HEK293 (cell line): ENCODE measurements at regions of chr10 and their contacts with region 1.

Region 1: GRCh38 chr10:91006001-91006751 is 85.3 kb upstream of the ANKRD1 start:
- H3K4me3 ChIP-seq: no peak overlapping the region
- H3K27ac ChIP-seq: no peak overlapping the region
- H3K4me1 ChIP-seq: no peaks in the 10 kb centered on the region
- CTCF ChIP-seq: peak; percentile 82

Region 2: GRCh38 chr10:90912174-90912573 is 94.0 kb before region 1 on chr10:
- CTCF ChIA-PET with region 1: interaction called, 23 read pairs
- POLR2A ChIA-PET with region 1: no interaction called
- H3K4me3 ChIP-seq: no peak overlapping the region
- H3K27ac ChIP-seq: no peak overlapping the region
- H3K4me1 ChIP-seq: no peaks in the 10 kb centered on the region
- CTCF ChIP-seq: no peak

Region 3: GRCh38 chr10:90947030-90947940 is 58.9 kb before region 1 on chr10:
- CTCF ChIA-PET with region 1: no interaction called
- POLR2A ChIA-PET with region 1: no interaction called
- H3K4me3 ChIP-seq: no peak overlapping the region
- H3K27ac ChIP-seq: no peak overlapping the region
- H3K4me1 ChIP-seq: no peaks in the 10 kb centered on the region
- CTCF ChIP-seq: no peak

Region 4: DNA sequence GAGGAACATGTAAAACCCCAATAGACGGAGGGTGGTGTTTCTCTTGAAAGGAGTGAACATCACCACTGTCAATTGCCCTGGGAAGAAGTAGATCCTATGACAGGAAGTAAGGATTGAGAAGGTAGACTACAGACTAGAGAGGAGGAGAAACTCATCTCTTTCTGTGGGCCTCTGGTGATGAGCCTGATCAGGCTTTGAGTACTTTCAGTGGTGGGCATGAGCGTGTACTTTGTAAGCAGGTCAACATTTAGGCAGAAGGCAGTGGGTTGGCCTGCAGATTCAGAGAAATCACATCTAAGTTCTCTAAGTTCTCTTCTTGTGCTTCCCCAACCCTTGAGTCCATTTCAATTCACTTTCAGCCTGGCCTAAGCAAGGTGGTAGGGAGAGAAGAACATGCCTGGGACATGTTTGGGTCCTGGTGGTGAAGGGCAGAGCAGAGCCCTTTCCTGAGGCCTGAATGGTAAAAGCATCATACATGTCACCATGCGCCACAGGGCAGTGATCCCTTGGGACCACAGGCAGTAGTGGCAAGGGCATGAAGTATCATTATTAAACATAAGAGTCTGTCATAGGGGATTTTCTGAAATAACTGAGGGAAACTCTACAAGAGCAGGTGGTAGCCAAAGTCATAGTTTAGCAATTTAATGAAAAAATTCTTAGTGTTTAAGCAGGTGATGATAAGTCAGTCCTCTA is 28.9 kb before region 1 on chr10:
- CTCF ChIA-PET with region 1: interaction called, 18 read pairs
- POLR2A ChIA-PET with region 1: no interaction called
- H3K4me3 ChIP-seq: no peak overlapping the region
- H3K27ac ChIP-seq: no peak overlapping the region
- H3K4me1 ChIP-seq: no peaks in the 10 kb centered on the region
- CTCF ChIP-seq: no peak

Region 5: DNA sequence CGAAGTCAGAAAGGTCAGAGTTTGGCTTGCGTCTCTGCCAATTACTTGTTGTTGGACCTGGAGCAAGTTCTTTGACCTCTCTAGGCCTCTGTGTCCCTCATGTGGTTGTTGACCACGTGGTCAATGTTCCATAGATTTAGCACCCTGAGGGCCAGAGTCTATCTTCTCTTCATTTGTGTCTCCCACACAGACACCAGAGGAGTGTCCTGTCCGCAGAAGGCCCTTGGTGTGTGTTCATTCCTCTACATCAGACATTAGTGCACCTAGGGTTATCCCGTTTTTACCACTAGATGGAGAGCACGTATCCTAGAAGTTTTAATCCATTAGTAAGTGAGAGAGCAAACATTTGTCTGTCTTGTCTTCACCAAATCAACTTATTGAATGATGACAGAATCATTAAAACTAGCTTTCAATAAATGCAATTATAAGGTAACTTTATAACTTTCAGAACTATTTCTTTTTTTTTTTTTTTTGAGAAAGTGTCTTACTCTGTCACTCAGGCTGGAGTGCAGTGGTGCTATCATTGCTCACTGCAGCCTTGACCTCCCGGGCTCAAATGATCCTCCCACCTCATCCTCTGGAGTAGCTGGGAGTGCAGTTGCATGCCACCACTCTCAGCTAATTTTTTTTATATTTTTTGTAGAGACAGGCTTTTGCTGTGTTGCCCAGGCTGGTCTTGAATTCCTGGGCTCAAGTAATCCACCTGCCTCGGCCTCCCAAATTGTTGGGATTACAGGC is 37.2 kb after region 1 on chr10:
- CTCF ChIA-PET with region 1: interaction called, 11 read pairs
- POLR2A ChIA-PET with region 1: no interaction called
- H3K4me3 ChIP-seq: no peak overlapping the region
- H3K27ac ChIP-seq: no peak overlapping the region
- H3K4me1 ChIP-seq: no peaks in the 10 kb centered on the region
- CTCF ChIP-seq: peak; percentile 60; the same call in 1 of the 2 replicates

Region 6: DNA sequence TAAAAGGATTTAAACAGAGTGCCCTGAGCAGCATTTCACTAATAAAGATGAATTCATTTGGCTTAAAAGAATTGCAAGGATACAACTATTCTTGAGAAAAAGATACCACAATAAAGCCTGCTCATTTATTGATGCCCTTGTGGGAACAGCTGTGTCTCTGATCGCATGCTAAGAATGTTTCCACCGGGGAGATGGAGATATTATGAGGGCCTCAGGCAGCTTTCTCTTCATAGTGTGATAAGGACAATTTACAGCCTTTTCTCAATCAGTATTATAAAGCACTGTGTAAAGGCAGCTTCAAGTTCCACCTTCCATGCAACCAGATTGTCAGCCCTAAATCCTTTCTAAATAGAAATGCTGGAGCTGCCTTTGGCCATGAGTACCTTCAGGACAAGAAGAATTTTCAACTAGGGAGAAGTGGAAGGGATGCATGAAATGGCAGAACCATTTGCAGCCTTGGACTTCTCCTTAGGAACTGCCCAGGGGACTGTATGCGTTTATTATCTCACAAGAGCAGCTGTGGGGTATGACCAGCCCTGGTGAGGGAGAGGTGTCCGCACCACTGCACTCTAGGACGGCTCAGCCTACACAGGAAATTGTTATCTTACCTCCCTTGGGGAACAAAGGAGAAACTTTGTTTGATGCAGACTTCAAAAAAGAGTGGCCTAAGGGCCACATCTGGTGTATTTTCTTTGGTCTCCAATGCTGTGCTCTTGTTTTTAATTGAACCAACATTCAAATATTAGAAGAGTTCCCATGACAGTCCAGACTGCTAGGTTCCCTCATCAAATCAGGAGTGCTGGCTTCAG is 97.4 kb after region 1 on chr10:
- CTCF ChIA-PET with region 1: no interaction called
- POLR2A ChIA-PET with region 1: no interaction called
- H3K4me3 ChIP-seq: no peak overlapping the region
- H3K27ac ChIP-seq: no peak overlapping the region
- H3K4me1 ChIP-seq: peaks cover 5% of the 10 kb centered on the region
- CTCF ChIP-seq: no peak

Region 7: GRCh38 chr10:91251430-91252056 is 245.4 kb after region 1 on chr10:
- CTCF ChIA-PET with region 1: interaction called, 87 read pairs
- POLR2A ChIA-PET with region 1: interaction called, 4 read pairs
- H3K4me3 ChIP-seq: no peak overlapping the region
- H3K27ac ChIP-seq: no peak overlapping the region
- H3K4me1 ChIP-seq: peaks cover 8% of the 10 kb centered on the region; the same call in 1 of the 2 replicates
- CTCF ChIP-seq: peak; percentile 36; the same call in 1 of the 2 replicates